ENCODE measurements at regions of chr11 and their contacts with region 1.

Region 1: GRCh38 chr11:75577207-75577606 is 15.2 kb downstream of the SERPINH1 start:
- DNase-seq: peak; percentile 42
- CTCF ChIP-seq: peak; percentile 21

Region 2: GRCh38 chr11:75563978-75564552 is 13.1 kb before region 1 on chr11:
- CTCF ChIA-PET with region 1: interaction called, 23 read pairs
- POLR2A ChIA-PET with region 1: interaction called, 3 read pairs
- DNase-seq: no peak
- CTCF ChIP-seq: no peak

Measured in GM10248 (cell line).